ENCODE measurements at regions of chr16 and their contacts with region 1.

Region 1: GRCh38 chr16:75234856-75235696 is 16.3 kb downstream of the CTRB1 start:
- DNase-seq: no peak
- ATAC-seq: no peak
- H3K4me3 ChIP-seq: no peak overlapping the region
- H3K4me3 Mint-ChIP-seq: no peak overlapping the region
- H3K27ac ChIP-seq: no peak overlapping the region
- H3K27ac Mint-ChIP-seq: no peak overlapping the region
- H3K4me1 ChIP-seq: no peaks in the 10 kb centered on the region
- H3K4me1 Mint-ChIP-seq: peaks cover 0 to 7% (median 4%) of the 10 kb centered on the region in 7 donors
- H3K27me3 ChIP-seq: no peaks in the 10 kb centered on the region
- H3K27me3 Mint-ChIP-seq: peaks cover 0 to 7% (median 0%) of the 10 kb centered on the region in 5 donors

Region 2: DNA sequence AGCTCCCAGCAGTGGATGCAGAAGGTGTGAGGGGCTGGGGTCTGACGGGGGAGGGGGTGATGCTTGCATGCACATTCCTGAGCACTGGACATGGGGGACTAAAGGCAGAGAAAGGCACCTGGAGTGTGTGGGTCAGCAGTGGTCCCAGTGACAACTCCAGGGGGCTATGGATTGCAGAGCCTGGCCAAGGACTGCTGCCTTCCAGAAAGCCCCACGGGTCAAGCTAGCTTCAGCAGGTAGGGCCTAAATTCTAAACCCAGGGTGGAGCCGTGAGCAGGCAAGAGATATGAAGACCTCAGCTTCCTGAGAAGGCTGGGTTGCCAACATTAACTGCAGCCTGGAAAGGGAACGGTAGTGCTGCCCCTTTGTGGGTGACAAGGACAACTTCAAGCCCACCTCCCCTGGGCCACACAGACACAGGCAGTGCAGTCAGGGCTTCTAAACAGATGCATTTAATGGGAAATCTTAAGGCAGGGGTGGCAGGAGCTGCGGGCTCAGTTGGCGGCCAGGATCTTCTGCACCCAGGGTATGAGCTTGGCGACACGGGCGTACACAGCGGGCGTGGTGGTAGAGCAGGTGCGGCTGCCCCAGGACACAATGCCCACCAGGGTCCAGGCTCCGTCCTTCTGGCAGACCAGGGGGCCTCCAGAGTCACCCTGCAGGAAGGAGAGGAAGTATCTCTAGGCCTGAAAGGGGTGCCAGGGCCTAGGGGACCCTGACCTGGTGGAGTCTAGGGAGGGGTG is 31.2 kb before region 1 on chr16:
- CTCF ChIA-PET with region 1: interaction called, 14 read pairs
- POLR2A ChIA-PET with region 1: interaction called, 3 read pairs
- intact Hi-C with region 1: loop called (anchors 1 to 5 kb)
- DNase-seq: no peak
- ATAC-seq: no peak
- H3K4me3 ChIP-seq: no peak overlapping the region
- H3K4me3 Mint-ChIP-seq: no peak overlapping the region
- H3K27ac ChIP-seq: no peak overlapping the region
- H3K27ac Mint-ChIP-seq: peak overlapping the region in 1 of 9 donors; percentile 38
- H3K4me1 ChIP-seq: peaks cover 0 to 14% of the 10 kb centered on the region in 2 donors
- H3K4me1 Mint-ChIP-seq: peaks cover 7 to 29% (median 22%) of the 10 kb centered on the region in 7 donors
- H3K27me3 ChIP-seq: no peaks in the 10 kb centered on the region
- H3K27me3 Mint-ChIP-seq: peaks cover 0 to 9% (median 0%) of the 10 kb centered on the region in 5 donors

Region 3: DNA sequence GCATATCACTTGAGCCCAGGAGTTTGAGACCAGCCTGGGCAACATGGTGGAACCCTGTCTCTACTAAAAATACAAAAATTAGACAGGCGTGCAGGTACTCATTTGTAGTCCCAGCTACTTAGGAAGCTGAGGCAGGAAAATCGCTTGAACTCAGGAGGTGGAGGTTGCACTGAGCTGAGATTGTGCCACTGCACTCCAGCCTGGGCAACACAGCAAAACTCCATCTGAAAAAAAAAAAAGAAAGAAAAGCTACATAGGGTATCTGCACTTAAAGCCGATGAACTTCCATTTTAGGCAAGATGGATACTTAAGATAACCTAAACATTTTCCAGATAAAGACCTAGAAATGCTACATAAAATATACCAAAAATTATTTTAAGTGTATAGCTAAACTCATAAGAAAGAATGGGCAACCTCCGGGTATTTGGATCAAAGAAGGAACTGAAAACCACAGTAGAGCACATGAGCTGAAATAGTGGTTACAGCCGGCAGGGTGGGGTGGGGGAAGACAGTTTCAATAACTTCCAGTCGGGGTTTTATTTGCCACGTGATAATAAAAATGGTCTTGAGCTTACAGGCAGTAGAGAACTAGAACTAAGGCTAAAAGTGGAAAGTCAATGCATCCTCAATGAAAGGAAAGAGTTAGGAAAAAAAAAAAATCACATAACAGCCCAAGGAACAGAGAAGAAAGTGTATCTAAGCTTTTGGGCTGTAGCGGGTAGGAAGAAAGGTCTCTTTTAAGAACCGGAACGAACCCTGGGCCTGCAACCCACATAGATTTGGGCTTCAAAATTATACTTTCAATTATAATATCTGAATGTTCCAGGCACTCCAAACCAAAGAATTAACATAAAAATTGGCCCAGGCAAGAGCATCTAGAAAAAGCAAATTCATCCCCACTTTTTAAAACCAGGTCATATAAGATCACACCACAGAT is 145.1 kb after region 1 on chr16:
- CTCF ChIA-PET with region 1: interaction called, 46 read pairs
- POLR2A ChIA-PET with region 1: interaction called, 3 read pairs
- intact Hi-C with region 1: loop called (anchors 1 kb)
- DNase-seq: peak in 7 of 9 donors; percentile 45 to 67 (median 64)
- ATAC-seq: peak; percentile 92
- H3K4me3 ChIP-seq: peak overlapping the region; percentile 28
- H3K4me3 Mint-ChIP-seq: peak overlapping the region; percentile 73 to 90 (median 83)
- H3K27ac ChIP-seq: no peak overlapping the region
- H3K27ac Mint-ChIP-seq: peak overlapping the region; percentile 17 to 84 (median 63)
- H3K4me1 ChIP-seq: peaks cover 15 to 27% of the 10 kb centered on the region in 2 donors
- H3K4me1 Mint-ChIP-seq: peaks cover 37 to 51% (median 48%) of the 10 kb centered on the region in 7 donors
- H3K27me3 ChIP-seq: no peaks in the 10 kb centered on the region
- H3K27me3 Mint-ChIP-seq: peaks cover 0 to 42% (median 0%) of the 10 kb centered on the region in 5 donors

Region 4: GRCh38 chr16:75385507-75386152 is 150.6 kb after region 1 on chr16:
- CTCF ChIA-PET with region 1: interaction called, 46 read pairs
- POLR2A ChIA-PET with region 1: no interaction called
- intact Hi-C with region 1: loop called (anchors 1 kb)
- DNase-seq: peak in 7 of 9 donors; percentile 35 to 71 (median 55)
- ATAC-seq: peak; percentile 67
- H3K4me3 ChIP-seq: no peak overlapping the region
- H3K4me3 Mint-ChIP-seq: no peak overlapping the region
- H3K27ac ChIP-seq: no peak overlapping the region
- H3K27ac Mint-ChIP-seq: peak overlapping the region in 1 of 9 donors; percentile 59
- H3K4me1 ChIP-seq: peaks cover 4 to 14% of the 10 kb centered on the region in 2 donors
- H3K4me1 Mint-ChIP-seq: peaks cover 9 to 25% (median 20%) of the 10 kb centered on the region in 7 donors
- H3K27me3 ChIP-seq: no peaks in the 10 kb centered on the region
- H3K27me3 Mint-ChIP-seq: peaks cover 0 to 17% (median 0%) of the 10 kb centered on the region in 5 donors

Region 5: GRCh38 chr16:75392911-75393310 is 157.8 kb after region 1 on chr16:
- CTCF ChIA-PET with region 1: interaction called, 23 read pairs
- POLR2A ChIA-PET with region 1: no interaction called
- intact Hi-C with region 1: no loop called
- DNase-seq: no peak
- ATAC-seq: no peak
- H3K4me3 ChIP-seq: no peak overlapping the region
- H3K4me3 Mint-ChIP-seq: no peak overlapping the region
- H3K27ac ChIP-seq: no peak overlapping the region
- H3K27ac Mint-ChIP-seq: no peak overlapping the region
- H3K4me1 ChIP-seq: no peaks in the 10 kb centered on the region
- H3K4me1 Mint-ChIP-seq: peaks cover 0 to 2% (median 0%) of the 10 kb centered on the region in 7 donors
- H3K27me3 ChIP-seq: no peaks in the 10 kb centered on the region
- H3K27me3 Mint-ChIP-seq: no peaks in the 10 kb centered on the region

Region 6: DNA sequence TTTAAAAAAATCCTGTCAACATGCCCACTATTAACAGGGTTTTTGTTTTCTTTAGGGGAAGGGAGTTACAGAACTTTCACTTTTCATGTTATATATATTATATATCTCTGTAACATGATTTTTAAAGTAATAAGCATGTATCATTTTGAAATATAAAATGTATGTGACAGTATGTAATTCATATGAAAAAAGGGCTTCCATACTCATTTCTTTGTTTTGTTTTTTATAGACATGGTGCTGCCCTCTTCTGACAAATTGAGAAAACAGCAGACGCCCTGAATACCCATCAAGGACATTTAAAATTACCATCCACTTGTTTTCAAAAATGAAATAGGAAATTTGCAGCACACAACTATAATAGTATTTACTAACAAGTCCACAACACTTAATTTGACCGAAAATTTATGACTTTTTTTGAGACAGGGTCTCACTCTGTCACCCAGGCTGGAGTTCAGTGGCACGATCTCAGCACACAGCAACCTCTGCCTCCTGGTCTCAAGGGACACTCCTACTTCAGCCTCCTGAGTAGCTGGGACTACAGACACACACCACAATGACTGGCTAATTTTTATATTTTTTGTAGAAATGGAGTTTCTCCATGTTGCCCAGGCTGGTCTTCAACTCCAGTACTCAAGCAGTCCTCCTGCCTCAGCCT is 167.9 kb after region 1 on chr16:
- CTCF ChIA-PET with region 1: interaction called, 20 read pairs
- POLR2A ChIA-PET with region 1: no interaction called
- intact Hi-C with region 1: loop called (anchors 1 kb)
- DNase-seq: peak in 5 of 9 donors; percentile 20 to 45 (median 31)
- ATAC-seq: peak; percentile 69
- H3K4me3 ChIP-seq: no peak overlapping the region
- H3K4me3 Mint-ChIP-seq: no peak overlapping the region
- H3K27ac ChIP-seq: no peak overlapping the region
- H3K27ac Mint-ChIP-seq: peak overlapping the region in 1 of 9 donors; percentile 47
- H3K4me1 ChIP-seq: no peaks in the 10 kb centered on the region
- H3K4me1 Mint-ChIP-seq: peaks cover 0 to 6% (median 0%) of the 10 kb centered on the region in 7 donors
- H3K27me3 ChIP-seq: no peaks in the 10 kb centered on the region
- H3K27me3 Mint-ChIP-seq: no peaks in the 10 kb centered on the region

Measured in naive thymus-derived CD4-positive, alpha-beta T cell (primary cell).